Endothelial cell of umbilical vein (primary cell): ENCODE measurements at regions of chr2 and their contacts with region 1.

Region 1: GRCh38 chr2:157302492-157303099 is 23.0 kb downstream of the ERMN start:
- DNase-seq: peak; percentile 58
- H3K4me3 ChIP-seq: no peak overlapping the region
- H3K27ac ChIP-seq: no peak overlapping the region
- H3K4me1 ChIP-seq: no peaks in the 10 kb centered on the region
- H3K27me3 ChIP-seq: peaks cover 0 to 2% of the 10 kb centered on the region in 2 experiments
- CTCF ChIP-seq: peak; percentile 62 to 64
- POLR2A ChIP-seq: no peak

Region 2: DNA sequence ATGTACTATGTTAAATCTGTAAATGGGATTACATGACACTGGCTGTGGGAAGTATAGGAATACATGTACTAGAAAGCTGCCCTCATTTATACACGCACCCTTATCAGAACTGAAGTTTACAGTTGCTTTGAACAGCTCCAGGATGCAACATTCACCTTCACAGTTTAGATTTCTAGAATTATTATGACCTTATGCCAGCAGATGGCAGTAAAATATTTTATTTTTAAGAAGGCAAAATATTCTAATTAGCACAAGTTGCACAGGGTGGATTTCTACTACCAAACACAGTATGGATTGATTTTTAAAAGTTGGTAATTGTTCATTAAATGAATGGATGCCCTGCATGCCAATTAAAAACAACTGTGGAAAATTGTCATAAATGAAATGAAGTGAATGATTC is 1933.7 kb before region 1 on chr2:
- CTCF ChIA-PET with region 1: interaction called, 19 read pairs
- POLR2A ChIA-PET with region 1: no interaction called
- dilution Hi-C with region 1: no loop called
- intact Hi-C with region 1: no loop called
- DNase-seq: peak; percentile 24
- H3K4me3 ChIP-seq: no peak overlapping the region
- H3K27ac ChIP-seq: no peak overlapping the region
- H3K4me1 ChIP-seq: no peaks in the 10 kb centered on the region
- H3K27me3 ChIP-seq: no peaks in the 10 kb centered on the region
- CTCF ChIP-seq: no peak
- POLR2A ChIP-seq: no peak

Region 3: DNA sequence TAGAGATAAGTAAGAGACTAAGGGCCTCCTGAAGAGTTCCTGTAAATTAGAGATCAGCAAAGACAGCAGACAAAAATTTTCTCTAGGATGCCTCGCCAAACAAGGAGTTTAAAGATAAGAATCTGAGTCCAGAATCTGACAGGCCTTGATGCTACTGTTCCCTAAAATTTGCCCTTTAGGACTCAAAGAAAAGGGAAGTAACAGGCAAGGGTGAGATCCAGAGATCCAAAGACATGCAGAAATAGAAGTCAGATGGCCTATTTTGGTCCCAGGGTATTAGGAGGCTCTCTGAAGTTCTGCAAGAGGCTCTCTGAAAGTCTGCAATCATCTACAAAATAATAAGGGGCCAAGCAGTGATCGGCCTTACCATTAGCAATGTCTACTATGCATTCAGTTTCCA is 12.1 kb before region 1 on chr2:
- CTCF ChIA-PET with region 1: interaction called, 33 read pairs
- POLR2A ChIA-PET with region 1: no interaction called
- dilution Hi-C with region 1: no loop called
- intact Hi-C with region 1: no loop called
- DNase-seq: no peak
- H3K4me3 ChIP-seq: no peak overlapping the region
- H3K27ac ChIP-seq: no peak overlapping the region
- H3K4me1 ChIP-seq: no peaks in the 10 kb centered on the region
- H3K27me3 ChIP-seq: no peaks in the 10 kb centered on the region
- CTCF ChIP-seq: no peak
- POLR2A ChIP-seq: no peak

Region 4: GRCh38 chr2:157318884-157319283 is 16.3 kb after region 1 on chr2:
- CTCF ChIA-PET with region 1: interaction called, 23 read pairs
- POLR2A ChIA-PET with region 1: no interaction called
- dilution Hi-C with region 1: no loop called
- intact Hi-C with region 1: no loop called
- DNase-seq: no peak
- H3K4me3 ChIP-seq: no peak overlapping the region
- H3K27ac ChIP-seq: no peak overlapping the region
- H3K4me1 ChIP-seq: no peaks in the 10 kb centered on the region
- H3K27me3 ChIP-seq: peaks cover 0 to 4% of the 10 kb centered on the region in 2 experiments
- CTCF ChIP-seq: no peak
- POLR2A ChIP-seq: no peak

Region 5: GRCh38 chr2:157327621-157328500 is 25.3 kb after region 1 on chr2:
- CTCF ChIA-PET with region 1: interaction called, 249 read pairs
- POLR2A ChIA-PET with region 1: no interaction called
- dilution Hi-C with region 1: no loop called
- intact Hi-C with region 1: loop called (anchors 2 kb)
- DNase-seq: peak; percentile 65
- H3K4me3 ChIP-seq: no peak overlapping the region
- H3K27ac ChIP-seq: no peak overlapping the region
- H3K4me1 ChIP-seq: no peaks in the 10 kb centered on the region
- H3K27me3 ChIP-seq: peaks cover 0 to 4% of the 10 kb centered on the region in 2 experiments
- CTCF ChIP-seq: peak; percentile 89 to 94
- POLR2A ChIP-seq: no peak

Region 6: DNA sequence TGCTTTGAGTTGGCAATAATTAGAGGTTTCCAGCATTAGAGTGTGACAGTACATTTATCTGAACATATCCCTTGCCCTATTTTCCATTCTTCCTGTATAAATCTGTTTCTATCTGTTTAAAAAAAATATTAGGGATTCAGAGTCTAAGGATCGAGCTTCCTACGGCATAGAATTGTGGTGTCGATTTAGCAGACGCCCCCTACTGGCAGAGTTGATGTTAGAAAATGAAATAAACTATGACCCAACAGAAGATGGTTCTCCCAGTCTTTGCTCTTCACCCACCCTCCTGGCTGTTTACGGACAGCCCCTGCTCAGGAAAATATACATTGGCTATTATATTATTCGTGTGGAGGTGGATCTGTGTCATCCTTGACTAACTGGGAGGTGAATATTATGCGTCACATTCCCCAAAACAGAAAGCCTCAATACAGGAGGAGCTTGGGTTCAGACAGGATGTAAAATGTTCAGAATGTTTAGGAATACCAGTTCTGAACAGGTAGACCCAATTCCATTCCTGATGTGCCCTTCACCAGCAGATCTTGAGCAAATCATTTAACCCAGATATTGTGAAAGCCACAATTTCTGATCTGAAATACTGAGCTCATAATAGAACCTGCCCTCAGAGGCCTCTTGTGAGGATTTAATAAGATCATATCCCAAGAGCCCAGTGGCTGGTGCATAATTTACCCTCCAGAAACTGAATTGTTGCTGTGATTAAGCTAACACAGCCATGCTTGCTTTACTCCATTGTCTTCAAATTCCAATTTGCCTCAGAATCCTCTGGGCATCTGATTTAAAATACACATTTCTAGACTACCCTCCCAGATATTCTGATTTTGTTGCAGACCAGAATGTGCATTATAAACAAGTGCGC is 33.8 kb after region 1 on chr2:
- CTCF ChIA-PET with region 1: interaction called, 249 read pairs
- POLR2A ChIA-PET with region 1: no interaction called
- dilution Hi-C with region 1: no loop called
- intact Hi-C with region 1: loop called (anchors 1 kb)
- DNase-seq: peak; percentile 31
- H3K4me3 ChIP-seq: no peak overlapping the region
- H3K27ac ChIP-seq: no peak overlapping the region
- H3K4me1 ChIP-seq: no peaks in the 10 kb centered on the region
- H3K27me3 ChIP-seq: no peaks in the 10 kb centered on the region
- CTCF ChIP-seq: peak; percentile 53 to 74
- POLR2A ChIP-seq: no peak

Region 7: DNA sequence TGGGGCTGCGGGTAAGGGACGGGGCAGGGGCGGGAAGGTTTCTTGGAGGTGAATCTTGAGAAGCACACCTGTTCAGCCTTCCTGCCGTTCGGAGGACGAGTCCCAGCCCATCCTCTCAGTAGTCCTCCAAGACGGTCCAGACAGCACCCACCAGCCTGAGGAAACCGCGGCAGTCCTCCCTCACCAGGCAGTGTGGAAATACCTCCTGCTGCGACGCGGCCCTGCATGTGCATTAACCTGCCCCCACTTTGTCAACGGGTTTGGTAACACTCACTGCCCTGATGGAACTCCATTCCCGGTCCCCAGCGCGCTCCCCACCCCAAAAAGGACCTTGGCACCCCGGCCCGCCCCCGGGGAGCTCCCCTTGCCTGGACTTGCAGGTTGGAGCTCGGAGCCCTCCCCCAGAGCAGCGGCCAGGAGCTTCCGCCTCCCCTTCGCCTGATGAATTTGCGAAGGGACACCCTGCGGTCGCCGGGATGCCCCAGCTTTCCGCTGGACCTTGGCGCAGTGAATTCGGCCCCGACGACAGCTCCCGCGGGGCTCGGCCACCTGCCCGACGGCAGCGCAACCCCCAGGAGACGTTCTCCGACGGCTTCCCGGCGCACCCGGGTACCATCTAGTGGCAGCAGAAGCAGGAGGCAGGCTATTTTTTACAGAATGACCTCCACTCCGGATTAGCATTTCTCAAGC is 294.5 kb after region 1 on chr2:
- CTCF ChIA-PET with region 1: interaction called, 4 read pairs
- POLR2A ChIA-PET with region 1: no interaction called
- dilution Hi-C with region 1: no loop called
- intact Hi-C with region 1: loop called (anchors 2 kb)
- DNase-seq: peak; percentile 4
- H3K4me3 ChIP-seq: no peak overlapping the region
- H3K27ac ChIP-seq: no peak overlapping the region
- H3K4me1 ChIP-seq: no peaks in the 10 kb centered on the region
- H3K27me3 ChIP-seq: peaks cover 10 to 20% of the 10 kb centered on the region in 2 experiments
- CTCF ChIP-seq: peak; percentile 18 to 56
- POLR2A ChIP-seq: no peak

Region 8: GRCh38 chr2:158130832-158131473 is 828.4 kb after region 1 on chr2:
- CTCF ChIA-PET with region 1: no interaction called
- POLR2A ChIA-PET with region 1: no interaction called
- dilution Hi-C with region 1: no loop called
- intact Hi-C with region 1: no loop called
- DNase-seq: no peak
- H3K4me3 ChIP-seq: no peak overlapping the region
- H3K27ac ChIP-seq: no peak overlapping the region
- H3K4me1 ChIP-seq: no peaks in the 10 kb centered on the region
- H3K27me3 ChIP-seq: peaks cover 0 to under 1% of the 10 kb centered on the region in 2 experiments
- CTCF ChIP-seq: no peak
- POLR2A ChIP-seq: no peak